ENCODE measurements at regions of chr2 and their contacts with region 1.

Region 1: DNA sequence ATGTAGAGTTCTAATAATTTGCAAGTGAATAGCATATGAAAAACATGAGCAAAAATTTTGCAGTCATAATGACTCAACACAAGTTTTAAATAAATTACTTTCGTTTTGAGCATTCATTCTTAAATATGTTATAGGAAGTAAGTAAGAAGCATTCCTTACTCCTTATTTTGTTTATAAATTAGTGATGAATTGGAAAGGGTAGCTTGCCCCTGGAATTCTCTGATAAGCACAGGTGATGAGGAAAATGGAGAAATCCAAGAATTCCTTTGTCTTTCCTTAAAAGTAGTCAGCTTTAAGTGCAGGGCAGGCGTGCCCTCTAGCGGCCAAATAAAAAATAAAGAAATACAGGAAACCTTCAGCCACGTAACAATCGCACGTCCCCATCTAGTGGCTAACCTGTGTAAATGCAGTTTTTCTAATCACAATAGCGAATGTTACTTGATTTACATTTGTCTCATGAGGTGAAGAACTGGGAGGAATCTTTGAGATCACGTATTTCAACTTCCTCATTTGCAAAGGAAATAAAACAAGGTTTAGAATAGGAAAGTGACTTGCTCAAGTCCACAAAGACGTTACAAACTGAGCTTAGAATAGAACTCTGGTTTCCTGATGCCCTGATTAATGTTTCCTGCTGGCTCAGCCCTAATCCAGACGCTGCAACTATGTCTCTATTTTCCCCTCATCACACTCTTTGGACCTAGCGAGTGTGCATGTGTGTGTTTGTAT is 47.2 kb upstream of the ZNG1B start:
- DNase-seq: peak; percentile 71
- ATAC-seq: peak; percentile 96
- H3K4me3 ChIP-seq: 0 out of 2 replicates have a peak overlapping the region, but pooled peaks have one; percentile 30
- H3K27ac ChIP-seq: peak overlapping the region; percentile 61; the same call in 1 of the 2 replicates
- H3K4me1 ChIP-seq: peaks cover 3% of the 10 kb centered on the region
- H3K27me3 ChIP-seq: no peaks in the 10 kb centered on the region
- CTCF ChIP-seq: peak; percentile 75 to 97 (median 95)
- EP300 ChIP-seq: no peak
- POLR2A ChIP-seq: no peak
- RAD21 ChIP-seq: peak; percentile 91

Region 2: DNA sequence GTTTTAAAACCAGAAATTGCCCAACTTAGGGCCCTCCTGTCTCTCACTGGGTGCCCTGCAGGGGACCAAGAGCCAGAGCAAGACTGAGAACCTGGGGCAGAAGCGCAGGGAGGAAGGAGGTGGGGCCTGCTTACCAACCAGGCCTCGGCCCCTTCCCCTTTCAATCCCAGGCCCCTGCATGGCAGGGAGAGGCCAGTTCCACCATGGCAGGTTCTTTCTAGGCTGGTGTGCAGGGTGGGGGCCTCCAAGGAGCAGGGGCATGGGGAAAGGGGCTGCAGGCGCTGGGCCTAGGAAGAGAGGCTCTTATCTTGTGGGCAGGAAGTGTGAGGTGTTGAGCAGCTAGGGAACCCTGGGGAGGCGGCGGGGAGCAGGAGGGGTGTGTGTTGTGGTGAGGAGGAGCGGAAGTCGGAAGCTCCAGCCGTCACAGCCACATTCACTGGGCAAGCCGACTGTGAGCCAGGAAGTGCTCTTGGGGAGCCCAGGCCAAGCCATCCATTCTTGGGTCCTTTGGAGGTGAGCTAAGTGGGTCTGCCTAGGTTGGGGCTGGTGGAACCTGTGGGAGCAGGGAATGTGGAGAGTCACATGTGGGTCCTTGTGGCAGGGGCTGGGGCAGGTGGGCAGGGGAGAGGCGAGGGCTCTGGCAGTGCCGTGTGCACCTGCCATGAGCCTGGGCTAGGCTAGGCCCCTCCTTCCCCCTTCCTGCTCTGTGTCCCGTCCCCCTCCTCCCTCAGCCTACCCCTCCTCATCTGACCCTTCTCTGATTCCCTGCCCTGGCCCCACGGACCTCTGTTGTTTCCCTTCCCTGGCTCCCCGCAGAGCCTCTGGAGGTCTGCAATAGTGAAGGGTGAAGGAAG is 216.5 kb before region 1 on chr2 and contains the start of gene PSD4:
- CTCF ChIA-PET with region 1: interaction called, 14 read pairs
- POLR2A ChIA-PET with region 1: no interaction called
- RAD21 ChIA-PET with region 1: interaction called, 8 read pairs
- SMC1A ChIA-PET with region 1: interaction called, 4 read pairs
- in situ Hi-C with region 1: no loop called
- intact Hi-C with region 1: no loop called
- DNase-seq: peak; percentile 67
- ATAC-seq: peak; percentile 87
- H3K4me3 ChIP-seq: peak within 1 kb of the TSS; percentile 95
- H3K27ac ChIP-seq: peak within 1 kb of the TSS; percentile 96
- H3K4me1 ChIP-seq: peaks cover 32% of the 10 kb centered on the region
- H3K27me3 ChIP-seq: no peaks in the 10 kb centered on the region
- CTCF ChIP-seq: 0 out of 6 replicates have a peak, but pooled peaks of 1 of the 3 experiments have one; percentile 12
- EP300 ChIP-seq: no peak
- POLR2A ChIP-seq: peak; percentile 96
- RAD21 ChIP-seq: no peak
- polyA plus RNA-seq, gene PSD4: 0.68 to 1.7 TPM

Region 3: DNA sequence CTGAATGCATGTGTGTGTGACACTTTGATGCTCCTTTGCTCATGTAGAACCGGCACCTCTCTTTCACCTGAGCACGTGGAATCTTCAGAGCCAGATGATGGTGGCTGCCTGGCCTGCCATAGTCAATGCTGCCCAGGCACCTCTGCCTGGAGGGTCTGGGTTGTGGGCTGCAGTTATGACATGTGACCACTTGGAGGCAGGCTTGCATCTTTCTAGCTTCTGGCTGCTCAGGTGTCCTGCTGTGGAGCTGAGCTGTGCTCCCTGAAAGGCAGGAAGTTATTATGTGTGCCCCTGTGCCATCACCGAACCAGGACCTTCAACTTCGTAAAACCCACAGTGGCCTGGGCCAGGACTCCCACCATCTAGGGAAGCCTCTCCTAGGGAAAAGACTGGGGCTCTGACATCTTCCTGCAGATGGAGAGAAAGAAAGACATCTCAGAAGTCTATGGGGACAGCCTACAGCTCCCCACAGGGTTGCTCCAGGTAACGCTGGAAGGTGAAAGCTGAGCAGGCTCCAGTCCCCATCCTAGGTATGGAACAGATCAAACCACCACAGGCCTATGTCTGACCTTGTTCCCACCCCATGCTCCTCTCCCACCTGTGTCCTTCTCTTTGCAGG is 186.3 kb before region 1 on chr2:
- CTCF ChIA-PET with region 1: interaction called, 36 read pairs
- POLR2A ChIA-PET with region 1: interaction called, 3 read pairs
- RAD21 ChIA-PET with region 1: interaction called, 5 read pairs
- SMC1A ChIA-PET with region 1: interaction called, 7 read pairs
- in situ Hi-C with region 1: no loop called
- intact Hi-C with region 1: loop called (anchors 2 kb)
- DNase-seq: peak; percentile 30
- ATAC-seq: peak; percentile 88
- H3K4me3 ChIP-seq: no peak overlapping the region
- H3K27ac ChIP-seq: no peak overlapping the region
- H3K4me1 ChIP-seq: no peaks in the 10 kb centered on the region
- H3K27me3 ChIP-seq: no peaks in the 10 kb centered on the region
- CTCF ChIP-seq: peak; percentile 84 to 90 (median 89)
- EP300 ChIP-seq: no peak
- POLR2A ChIP-seq: peak; percentile 58
- RAD21 ChIP-seq: peak; percentile 71

Region 4: GRCh38 chr2:113257516-113258264 is 132.6 kb before region 1 on chr2:
- CTCF ChIA-PET with region 1: interaction called, 21 read pairs
- POLR2A ChIA-PET with region 1: no interaction called
- RAD21 ChIA-PET with region 1: no interaction called
- SMC1A ChIA-PET with region 1: interaction called, 3 read pairs
- in situ Hi-C with region 1: no loop called
- intact Hi-C with region 1: no loop called
- DNase-seq: no peak
- ATAC-seq: no peak
- H3K4me3 ChIP-seq: no peak overlapping the region
- H3K27ac ChIP-seq: no peak overlapping the region
- H3K4me1 ChIP-seq: no peaks in the 10 kb centered on the region
- H3K27me3 ChIP-seq: no peaks in the 10 kb centered on the region
- CTCF ChIP-seq: no peak
- EP300 ChIP-seq: no peak
- POLR2A ChIP-seq: no peak
- RAD21 ChIP-seq: no peak

Region 5: GRCh38 chr2:113298176-113298575 is 92.1 kb before region 1 on chr2:
- CTCF ChIA-PET with region 1: interaction called, 22 read pairs
- POLR2A ChIA-PET with region 1: no interaction called
- RAD21 ChIA-PET with region 1: interaction called, 5 read pairs
- SMC1A ChIA-PET with region 1: interaction called, 3 read pairs
- in situ Hi-C with region 1: no loop called
- intact Hi-C with region 1: loop called (anchors 2 kb)
- DNase-seq: no peak
- ATAC-seq: no peak
- H3K4me3 ChIP-seq: no peak overlapping the region
- H3K27ac ChIP-seq: no peak overlapping the region
- H3K4me1 ChIP-seq: no peaks in the 10 kb centered on the region
- H3K27me3 ChIP-seq: no peaks in the 10 kb centered on the region; a peak in 1 of 4 replicates
- CTCF ChIP-seq: no peak
- EP300 ChIP-seq: no peak
- POLR2A ChIP-seq: no peak
- RAD21 ChIP-seq: no peak

Region 6: DNA sequence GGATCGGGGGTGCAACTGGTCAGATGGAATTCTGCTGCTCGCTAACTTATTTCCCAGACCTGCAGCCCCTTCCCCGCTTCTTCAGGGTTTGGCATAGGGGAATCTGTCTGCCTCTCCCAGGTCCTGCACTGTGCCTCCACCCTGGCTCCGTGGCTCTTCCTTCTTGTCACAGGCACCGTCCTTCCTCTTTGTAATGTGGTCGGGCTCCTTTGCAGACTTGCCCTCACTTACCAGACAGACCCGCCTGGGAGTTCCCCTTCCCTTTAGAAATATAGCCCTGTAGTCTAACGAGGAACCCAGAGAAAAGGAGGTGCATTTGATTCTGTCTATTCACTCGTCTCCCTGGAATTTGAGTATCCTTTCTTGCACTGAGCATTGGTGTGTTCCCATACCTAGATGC is 47.6 kb before region 1 on chr2:
- CTCF ChIA-PET with region 1: no interaction called
- POLR2A ChIA-PET with region 1: no interaction called
- RAD21 ChIA-PET with region 1: no interaction called
- SMC1A ChIA-PET with region 1: no interaction called
- in situ Hi-C with region 1: no loop called
- intact Hi-C with region 1: no loop called
- DNase-seq: no peak
- ATAC-seq: peak; percentile 55
- H3K4me3 ChIP-seq: no peak overlapping the region
- H3K27ac ChIP-seq: no peak overlapping the region
- H3K4me1 ChIP-seq: no peaks in the 10 kb centered on the region
- H3K27me3 ChIP-seq: no peaks in the 10 kb centered on the region
- CTCF ChIP-seq: no peak
- EP300 ChIP-seq: no peak
- POLR2A ChIP-seq: no peak
- RAD21 ChIP-seq: no peak

Region 7: GRCh38 chr2:114426756-114427155 is 1036.5 kb after region 1 on chr2:
- CTCF ChIA-PET with region 1: no interaction called
- POLR2A ChIA-PET with region 1: no interaction called
- RAD21 ChIA-PET with region 1: no interaction called
- SMC1A ChIA-PET with region 1: no interaction called
- in situ Hi-C with region 1: no loop called
- intact Hi-C with region 1: no loop called
- DNase-seq: no peak
- ATAC-seq: no peak
- H3K4me3 ChIP-seq: no peak overlapping the region
- H3K27ac ChIP-seq: no peak overlapping the region
- H3K4me1 ChIP-seq: no peaks in the 10 kb centered on the region
- H3K27me3 ChIP-seq: no peaks in the 10 kb centered on the region
- CTCF ChIP-seq: no peak
- EP300 ChIP-seq: no peak
- POLR2A ChIP-seq: no peak
- RAD21 ChIP-seq: no peak